Activated naive CD4-positive, alpha-beta T cell treated with anti-CD3 and anti-CD28 coated beads for 36 hours (primary cell): ENCODE measurements at regions of chr9 and their contacts with region 1.

Region 1: GRCh38 chr9:137034863-137035761 is 3.2 kb upstream of the FUT7 start:
- DNase-seq: peak; percentile 93
- H3K4me3 Mint-ChIP-seq: peak overlapping the region; percentile 59
- H3K27ac Mint-ChIP-seq: peak overlapping the region; percentile 79
- H3K4me1 Mint-ChIP-seq: peaks cover 29% of the 10 kb centered on the region
- H3K27me3 Mint-ChIP-seq: peaks cover 2% of the 10 kb centered on the region

Region 2: DNA sequence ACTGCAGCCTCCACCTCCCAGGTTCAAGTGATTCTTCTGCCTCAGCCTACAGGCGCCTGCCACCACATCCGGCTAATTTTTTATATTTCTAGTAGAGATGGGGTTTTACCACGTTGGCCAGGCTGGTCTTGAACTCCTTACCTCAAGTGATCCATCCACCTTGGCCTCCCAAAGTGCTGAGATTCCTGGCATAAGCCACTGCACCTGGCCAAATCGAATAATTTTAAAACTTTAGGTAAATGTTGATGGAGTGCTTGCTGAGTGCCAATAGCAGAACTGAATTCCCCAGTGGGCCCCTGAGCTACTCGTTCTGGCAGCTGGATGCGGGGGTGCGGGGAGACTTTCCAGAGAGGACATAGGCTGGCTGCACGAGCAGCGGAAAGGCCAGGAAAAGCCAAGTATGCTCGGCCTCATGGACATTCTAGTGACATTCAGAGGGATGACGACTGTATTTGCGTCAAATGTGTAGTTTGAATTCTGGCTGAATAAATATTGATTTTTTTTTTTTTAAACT is 132.0 kb before region 1 on chr9:
- CTCF ChIA-PET with region 1: no interaction called
- intact Hi-C with region 1: no loop called
- DNase-seq: no peak
- H3K4me3 Mint-ChIP-seq: no peak overlapping the region
- H3K27ac Mint-ChIP-seq: peak overlapping the region; percentile 94
- H3K4me1 Mint-ChIP-seq: peaks cover 52% of the 10 kb centered on the region
- H3K27me3 Mint-ChIP-seq: no peaks in the 10 kb centered on the region

Region 3: GRCh38 chr9:136949817-136950655 is 85.1 kb before region 1 on chr9:
- CTCF ChIA-PET with region 1: interaction called, 30 read pairs
- intact Hi-C with region 1: loop called (anchors 1 kb)
- DNase-seq: peak; percentile 98
- H3K4me3 Mint-ChIP-seq: peak overlapping the region; percentile 82
- H3K27ac Mint-ChIP-seq: peak overlapping the region; percentile 72
- H3K4me1 Mint-ChIP-seq: peaks cover under 1% of the 10 kb centered on the region
- H3K27me3 Mint-ChIP-seq: no peaks in the 10 kb centered on the region

Region 4: DNA sequence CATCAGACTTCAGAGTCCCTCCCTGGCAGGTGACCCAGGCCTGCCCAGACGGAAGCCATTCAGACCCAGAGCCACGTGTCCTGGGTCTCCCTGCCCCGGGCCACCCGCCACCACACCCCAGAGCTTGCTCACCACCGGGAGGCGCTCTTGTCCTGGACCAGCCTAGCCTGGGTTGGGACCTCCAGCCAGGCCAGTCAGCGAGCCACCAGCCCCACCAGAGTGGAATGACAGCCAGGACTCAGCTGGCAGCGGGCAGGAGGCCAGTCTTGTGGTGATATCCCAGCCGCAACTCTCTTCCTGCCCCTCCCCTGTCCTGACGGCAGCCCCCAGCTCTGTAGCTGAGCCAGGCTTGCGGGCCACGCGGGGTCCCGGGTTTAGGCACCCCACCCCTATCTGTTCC is 59.5 kb before region 1 on chr9:
- CTCF ChIA-PET with region 1: interaction called, 14 read pairs
- intact Hi-C with region 1: no loop called
- DNase-seq: peak; percentile 45
- H3K4me3 Mint-ChIP-seq: no peak overlapping the region
- H3K27ac Mint-ChIP-seq: no peak overlapping the region
- H3K4me1 Mint-ChIP-seq: peaks cover 14% of the 10 kb centered on the region
- H3K27me3 Mint-ChIP-seq: peaks cover 1% of the 10 kb centered on the region

Region 5: GRCh38 chr9:137000177-137000883 is 34.8 kb before region 1 on chr9:
- CTCF ChIA-PET with region 1: interaction called, 15 read pairs
- intact Hi-C with region 1: loop called (anchors 2 kb)
- DNase-seq: no peak
- H3K4me3 Mint-ChIP-seq: no peak overlapping the region
- H3K27ac Mint-ChIP-seq: no peak overlapping the region
- H3K4me1 Mint-ChIP-seq: peaks cover 13% of the 10 kb centered on the region
- H3K27me3 Mint-ChIP-seq: peaks cover 13% of the 10 kb centered on the region

Region 6: DNA sequence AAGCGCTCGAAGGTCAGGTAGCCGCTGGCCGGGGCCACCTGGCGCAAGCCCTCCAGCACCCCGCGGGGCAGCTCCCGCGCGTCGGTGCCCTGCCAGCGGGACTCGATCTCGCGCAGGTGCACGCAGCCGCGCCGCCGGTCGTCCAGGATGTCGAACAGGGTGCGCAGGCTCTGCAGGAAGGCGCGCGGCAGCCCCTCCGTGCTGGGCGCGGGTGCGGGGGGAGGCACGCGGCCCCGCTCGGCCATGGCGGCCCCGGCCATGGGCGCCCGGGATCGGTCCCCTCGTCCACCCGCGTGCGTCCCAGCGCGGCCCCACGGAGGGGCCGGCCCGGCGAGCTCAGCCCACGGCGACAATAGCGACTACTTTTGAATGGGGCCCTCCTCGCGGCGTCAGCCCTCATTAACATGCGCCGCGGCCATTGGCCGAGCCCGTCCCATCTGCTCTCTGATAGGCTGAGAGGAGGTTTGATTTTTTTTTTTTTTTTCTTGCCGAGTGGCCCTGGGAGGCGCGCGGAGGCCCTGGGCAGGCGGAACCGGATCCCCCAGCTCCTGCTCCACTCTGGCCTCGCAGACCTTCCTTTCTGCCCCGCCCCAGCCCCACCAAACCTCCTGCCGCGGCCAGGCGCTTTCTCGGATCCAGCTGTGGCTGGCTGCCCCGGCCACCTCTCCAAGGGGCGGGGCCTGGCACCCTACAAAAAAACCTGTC is 35.2 kb after region 1 on chr9 and contains the start of gene SAPCD2:
- CTCF ChIA-PET with region 1: interaction called, 66 read pairs
- intact Hi-C with region 1: loop called (anchors 1 kb)
- DNase-seq: peak; percentile 86
- H3K4me3 Mint-ChIP-seq: peak within 1 kb of the TSS; percentile 56
- H3K27ac Mint-ChIP-seq: peak within 1 kb of the TSS; percentile 40
- H3K4me1 Mint-ChIP-seq: peaks cover 9% of the 10 kb centered on the region
- H3K27me3 Mint-ChIP-seq: peaks cover 3% of the 10 kb centered on the region
- total RNA-seq, gene SAPCD2: 3.8 to 3.9 TPM

Region 7: GRCh38 chr9:137302176-137302994 is 267.3 kb after region 1 on chr9 and contains the start of gene NRARP:
- CTCF ChIA-PET with region 1: no interaction called
- intact Hi-C with region 1: no loop called
- DNase-seq: peak; percentile 93
- H3K4me3 Mint-ChIP-seq: peak within 1 kb of the TSS; percentile 73
- H3K27ac Mint-ChIP-seq: no peak within 1 kb of the TSS
- H3K4me1 Mint-ChIP-seq: peaks cover 11% of the 10 kb centered on the region
- H3K27me3 Mint-ChIP-seq: peaks cover 12% of the 10 kb centered on the region
- total RNA-seq, gene NRARP: 1.8 to 2.2 TPM